Psoas muscle (tissue), 8 donors: ENCODE measurements at regions of chr2 and their contacts with region 1.

Region 1: DNA sequence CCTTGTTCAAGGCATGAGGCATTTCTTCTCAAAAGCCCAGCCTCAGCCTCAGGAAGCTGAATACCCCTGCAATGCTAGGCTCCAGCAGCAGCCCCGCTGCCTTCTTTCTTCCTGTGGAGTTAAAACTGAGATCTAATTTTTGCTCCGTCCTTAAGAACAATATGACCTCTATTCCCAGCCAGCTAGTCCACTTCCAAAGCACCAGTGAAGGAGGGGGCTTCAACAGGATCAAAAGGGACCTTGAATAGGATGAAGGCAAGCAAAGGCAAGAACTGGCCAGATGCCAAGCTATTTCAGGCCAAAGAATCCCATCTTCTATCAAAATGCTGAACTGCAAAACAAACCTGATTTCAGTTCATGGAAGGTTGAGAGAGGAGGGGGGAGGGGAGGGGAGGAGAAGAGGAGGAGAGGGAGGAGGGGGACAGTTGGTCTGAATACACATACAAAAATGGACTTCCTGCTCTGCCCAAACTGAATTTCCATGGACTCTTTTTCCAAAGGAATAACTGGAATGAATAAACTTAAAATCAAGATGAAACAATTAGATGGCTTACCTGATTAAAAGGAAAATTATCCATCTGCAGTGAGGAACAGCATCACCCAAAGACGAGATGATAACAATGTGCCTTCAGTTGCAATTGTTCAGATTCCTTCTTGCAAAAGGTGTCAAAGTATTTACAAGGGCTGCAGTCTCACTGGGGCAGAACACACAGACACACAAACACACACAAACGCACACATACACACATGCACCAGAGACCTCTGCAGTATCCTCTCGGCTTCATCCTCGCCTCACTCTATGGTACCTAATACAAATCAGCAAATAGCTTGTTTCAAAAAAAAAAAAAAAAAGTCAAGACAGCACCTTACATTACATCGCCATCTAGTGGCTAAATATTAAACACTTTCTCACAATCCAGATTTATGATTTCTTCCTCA is at the start of gene SCN1A:
- DNase-seq: no peak
- ATAC-seq: peak in 1 of 4 donors; percentile 44
- H3K4me3 ChIP-seq: no peak within 1 kb of the TSS
- H3K27ac ChIP-seq: no peak within 1 kb of the TSS
- H3K4me1 ChIP-seq: no peaks in the 10 kb centered on the region
- H3K27me3 ChIP-seq: no peaks in the 10 kb centered on the region
- CTCF ChIP-seq: peak; percentile 66
- total RNA-seq, gene SCN1A: not detected

Region 2: GRCh38 chr2:165953655-165954606 is 173.6 kb before region 1 on chr2 and contains the start of gene TTC21B:
- intact Hi-C with region 1: loop called (anchors 1 to 2 kb)
- DNase-seq: peak; percentile 96
- ATAC-seq: peak; percentile 99 to 100 (median 99)
- H3K4me3 ChIP-seq: peak within 1 kb of the TSS; percentile 80
- H3K27ac ChIP-seq: peak within 1 kb of the TSS; percentile 85
- H3K4me1 ChIP-seq: peaks cover 24% of the 10 kb centered on the region
- H3K27me3 ChIP-seq: no peaks in the 10 kb centered on the region
- CTCF ChIP-seq: peak; percentile 84
- total RNA-seq, gene TTC21B: 10.6 to 16.7 (median 14.3) TPM

Region 3: GRCh38 chr2:166000401-166000800 is 127.1 kb before region 1 on chr2:
- intact Hi-C with region 1: no loop called
- DNase-seq: no peak
- ATAC-seq: no peak
- H3K4me3 ChIP-seq: no peak overlapping the region
- H3K27ac ChIP-seq: no peak overlapping the region
- H3K4me1 ChIP-seq: no peaks in the 10 kb centered on the region
- H3K27me3 ChIP-seq: no peaks in the 10 kb centered on the region
- CTCF ChIP-seq: no peak

Region 4: DNA sequence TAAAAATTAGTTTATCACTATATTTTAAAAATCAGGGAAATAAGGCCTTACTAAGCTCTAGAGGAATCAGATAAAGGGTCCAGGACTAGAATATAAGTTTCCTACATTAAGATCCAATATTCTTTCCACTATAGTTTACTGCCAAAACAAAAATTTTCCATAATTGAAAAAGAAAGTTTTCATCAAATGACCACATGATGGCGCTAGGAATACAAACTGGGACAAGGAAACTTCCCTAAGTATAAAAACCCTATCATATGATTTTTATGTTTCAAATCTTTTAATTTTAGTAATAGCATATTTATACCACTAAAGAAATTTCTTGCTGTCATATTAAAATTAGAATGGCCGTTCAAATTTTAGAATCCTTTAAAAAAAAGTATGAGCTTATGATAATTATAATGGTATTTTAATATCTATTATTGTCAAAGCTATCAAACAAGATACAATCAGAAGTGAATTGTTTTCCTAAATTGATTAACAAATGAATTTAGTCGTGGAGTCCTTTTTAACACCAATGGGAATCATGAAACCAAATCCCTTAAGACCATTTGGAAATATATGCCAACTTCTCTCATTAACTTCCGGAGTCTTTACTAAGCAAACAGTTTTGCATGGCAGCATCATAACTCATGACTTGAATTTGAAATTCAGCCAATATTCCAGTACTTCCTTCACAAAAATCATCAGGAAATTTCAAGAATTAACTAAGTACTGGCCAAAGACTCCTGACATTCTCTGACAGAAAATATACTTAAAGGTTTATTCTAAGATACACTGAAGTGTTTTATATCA is 69.9 kb before region 1 on chr2:
- intact Hi-C with region 1: loop called (anchors 5 kb)
- DNase-seq: no peak
- ATAC-seq: no peak
- H3K4me3 ChIP-seq: no peak overlapping the region
- H3K27ac ChIP-seq: no peak overlapping the region
- H3K4me1 ChIP-seq: no peaks in the 10 kb centered on the region
- H3K27me3 ChIP-seq: no peaks in the 10 kb centered on the region
- CTCF ChIP-seq: peak; percentile 51